Vagina (tissue), 2 donors: ENCODE measurements at regions of chr3 and their contacts with region 1.

Region 1: GRCh38 chr3:167798443-167798842 is 62.9 kb downstream of the SERPINI1 start:
- DNase-seq: no peak
- H3K4me3 ChIP-seq: no peak overlapping the region
- H3K27ac ChIP-seq: no peak overlapping the region
- H3K4me1 ChIP-seq: no peaks in the 10 kb centered on the region
- H3K27me3 ChIP-seq: no peaks in the 10 kb centered on the region
- CTCF ChIP-seq: no peak
- POLR2A ChIP-seq: no peak

Region 2: DNA sequence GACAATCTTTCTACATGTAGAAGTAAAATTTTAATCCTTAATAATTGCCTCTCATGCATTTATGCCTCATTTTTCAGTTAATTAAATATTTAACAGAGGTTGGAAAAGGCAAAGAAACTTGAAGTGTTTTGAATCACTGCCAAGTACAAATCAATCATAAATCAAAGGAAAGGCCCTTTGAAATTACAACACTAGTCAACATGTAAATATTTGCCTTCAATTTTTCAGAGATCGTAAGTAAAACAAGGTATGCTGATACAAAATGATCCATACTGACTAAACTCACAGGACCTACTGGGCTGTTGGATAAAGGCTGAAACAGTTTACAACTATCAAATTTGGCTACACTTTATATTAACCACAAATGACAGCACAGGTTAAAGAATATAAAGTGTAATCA is 452.3 kb before region 1 on chr3:
- intact Hi-C with region 1: no loop called
- DNase-seq: no peak
- H3K4me3 ChIP-seq: no peak overlapping the region
- H3K27ac ChIP-seq: no peak overlapping the region
- H3K4me1 ChIP-seq: no peaks in the 10 kb centered on the region
- H3K27me3 ChIP-seq: no peaks in the 10 kb centered on the region
- CTCF ChIP-seq: no peak
- POLR2A ChIP-seq: no peak

Region 3: GRCh38 chr3:167750272-167750971 is 48.0 kb before region 1 on chr3:
- intact Hi-C with region 1: loop called (anchors 1 kb)
- DNase-seq: no peak
- H3K4me3 ChIP-seq: no peak overlapping the region
- H3K27ac ChIP-seq: no peak overlapping the region
- H3K4me1 ChIP-seq: no peaks in the 10 kb centered on the region
- H3K27me3 ChIP-seq: no peaks in the 10 kb centered on the region
- CTCF ChIP-seq: no peak
- POLR2A ChIP-seq: no peak